CD8-positive, alpha-beta T cell (primary cell): ENCODE measurements at regions of chr9 and their contacts with region 1.

Region 1: GRCh38 chr9:123757960-123758359 is 172.0 kb downstream of the DENND1A start:
- DNase-seq: no peak
- ATAC-seq: no peak
- H3K4me3 ChIP-seq: no peak overlapping the region
- H3K4me3 Mint-ChIP-seq: no peak overlapping the region
- H3K27ac ChIP-seq: no peak overlapping the region
- H3K27ac Mint-ChIP-seq: no peak overlapping the region
- H3K4me1 ChIP-seq: no peaks in the 10 kb centered on the region
- H3K4me1 Mint-ChIP-seq: no peaks in the 10 kb centered on the region
- H3K27me3 ChIP-seq: no peaks in the 10 kb centered on the region
- H3K27me3 Mint-ChIP-seq: no peaks in the 10 kb centered on the region
- CTCF ChIP-seq: no peak

Region 2: GRCh38 chr9:123739387-123739786 is 18.6 kb before region 1 on chr9:
- CTCF ChIA-PET with region 1: interaction called, 3 read pairs
- POLR2A ChIA-PET with region 1: no interaction called
- intact Hi-C with region 1: loop called in 1 of 2 experiments (anchors 2 kb)
- DNase-seq: no peak
- ATAC-seq: no peak
- H3K4me3 ChIP-seq: no peak overlapping the region
- H3K4me3 Mint-ChIP-seq: no peak overlapping the region
- H3K27ac ChIP-seq: no peak overlapping the region
- H3K27ac Mint-ChIP-seq: no peak overlapping the region
- H3K4me1 ChIP-seq: no peaks in the 10 kb centered on the region
- H3K4me1 Mint-ChIP-seq: peaks cover 3% of the 10 kb centered on the region
- H3K27me3 ChIP-seq: no peaks in the 10 kb centered on the region
- H3K27me3 Mint-ChIP-seq: no peaks in the 10 kb centered on the region
- CTCF ChIP-seq: no peak

Region 3: DNA sequence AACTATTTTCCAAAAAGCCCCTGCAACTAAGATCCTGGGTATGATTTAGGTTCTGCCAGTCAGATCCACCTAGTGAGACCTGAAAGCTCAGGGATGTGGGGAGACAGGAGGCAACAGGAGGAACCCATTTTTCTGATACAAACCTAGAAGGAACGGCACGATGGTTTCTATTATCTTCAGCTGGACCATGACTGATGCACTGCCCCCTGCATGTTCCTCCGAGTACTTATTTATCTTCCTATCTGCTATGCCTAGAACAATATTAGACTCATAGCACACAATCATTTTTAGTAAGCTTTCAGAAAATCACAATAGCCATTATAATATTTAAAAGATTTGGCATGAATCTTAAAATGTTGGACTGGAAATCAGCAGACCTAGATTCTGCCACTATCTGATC is 51.0 kb after region 1 on chr9:
- CTCF ChIA-PET with region 1: no interaction called
- POLR2A ChIA-PET with region 1: no interaction called
- intact Hi-C with region 1: no loop called
- DNase-seq: no peak
- ATAC-seq: no peak
- H3K4me3 ChIP-seq: no peak overlapping the region
- H3K4me3 Mint-ChIP-seq: no peak overlapping the region
- H3K27ac ChIP-seq: no peak overlapping the region
- H3K27ac Mint-ChIP-seq: no peak overlapping the region
- H3K4me1 ChIP-seq: no peaks in the 10 kb centered on the region
- H3K4me1 Mint-ChIP-seq: no peaks in the 10 kb centered on the region
- H3K27me3 ChIP-seq: no peaks in the 10 kb centered on the region
- H3K27me3 Mint-ChIP-seq: no peaks in the 10 kb centered on the region
- CTCF ChIP-seq: no peak